ENCODE measurements at regions of chr6 and their contacts with region 1.

Region 1: DNA sequence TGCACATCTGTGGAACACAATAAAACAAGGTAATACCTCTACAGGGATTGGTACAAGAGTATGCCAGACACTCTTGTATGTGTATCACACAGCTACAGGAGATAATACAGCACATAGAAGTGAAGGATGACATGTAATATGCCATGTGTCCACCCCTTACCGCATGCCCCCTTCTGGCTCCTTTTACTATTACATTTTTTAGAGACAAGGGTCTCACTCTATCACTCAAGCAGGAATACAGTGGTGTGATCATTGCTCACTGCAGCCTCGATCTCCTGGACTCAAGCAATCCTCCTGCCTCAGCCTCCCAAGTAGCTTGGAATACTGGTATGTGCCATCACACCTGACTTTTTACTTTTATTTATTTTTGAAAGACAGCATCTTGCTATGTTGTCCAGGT is 4.2 kb upstream of the NCR3 start:
- DNase-seq: no peak
- H3K4me3 ChIP-seq: no peak overlapping the region
- H3K27ac ChIP-seq: no peak overlapping the region
- H3K4me1 ChIP-seq: no peaks in the 10 kb centered on the region
- H3K27me3 ChIP-seq: no peaks in the 10 kb centered on the region
- CTCF ChIP-seq: peak in 2 of 3 experiments; percentile 48 to 52; a peak in 2 of 4 replicates
- EP300 ChIP-seq: no peak
- POLR2A ChIP-seq: no peak
- RAD21 ChIP-seq: peak; percentile 26 to 40; a peak in 3 of 4 replicates

Region 2: GRCh38 chr6:31559958-31560696 is 36.9 kb before region 1 on chr6:
- CTCF ChIA-PET with region 1: interaction called, 613 read pairs
- POLR2A ChIA-PET with region 1: interaction called, 4 read pairs
- DNase-seq: no peak
- H3K4me3 ChIP-seq: no peak overlapping the region
- H3K27ac ChIP-seq: no peak overlapping the region
- H3K4me1 ChIP-seq: no peaks in the 10 kb centered on the region
- H3K27me3 ChIP-seq: no peaks in the 10 kb centered on the region
- CTCF ChIP-seq: no peak
- EP300 ChIP-seq: no peak
- POLR2A ChIP-seq: no peak
- RAD21 ChIP-seq: no peak

Region 3: DNA sequence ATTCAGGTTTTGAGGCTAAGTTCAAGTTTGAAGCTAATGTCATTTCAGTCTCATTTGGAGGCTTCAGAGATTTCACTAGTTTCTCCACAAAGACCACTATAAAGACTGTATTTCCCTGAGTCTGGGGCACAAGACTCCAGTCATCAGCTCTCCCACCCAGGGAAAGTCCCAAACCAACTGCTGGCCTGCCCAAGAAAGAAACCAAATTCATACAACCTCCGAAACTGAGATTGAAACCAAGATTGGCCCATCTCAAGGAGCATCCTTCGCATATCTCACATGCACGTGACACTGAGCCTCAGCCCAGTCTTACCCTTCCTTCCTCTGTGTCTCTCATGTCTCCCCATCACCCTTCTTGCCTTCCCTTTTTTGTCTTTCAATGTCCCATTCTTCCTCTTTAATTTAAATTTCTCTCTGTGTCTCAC is 28.5 kb before region 1 on chr6:
- CTCF ChIA-PET with region 1: interaction called, 640 read pairs
- POLR2A ChIA-PET with region 1: no interaction called
- DNase-seq: no peak
- H3K4me3 ChIP-seq: no peak overlapping the region
- H3K27ac ChIP-seq: no peak overlapping the region
- H3K4me1 ChIP-seq: no peaks in the 10 kb centered on the region; a peak in 2 of 7 replicates
- H3K27me3 ChIP-seq: no peaks in the 10 kb centered on the region
- CTCF ChIP-seq: no peak
- EP300 ChIP-seq: no peak
- POLR2A ChIP-seq: no peak
- RAD21 ChIP-seq: no peak

Region 4: GRCh38 chr6:31580807-31581433 is 16.1 kb before region 1 on chr6:
- CTCF ChIA-PET with region 1: interaction called, 640 read pairs
- POLR2A ChIA-PET with region 1: interaction called, 8 read pairs
- DNase-seq: peak; percentile 38 to 96
- H3K4me3 ChIP-seq: peak overlapping the region; percentile 54 to 89 (median 80)
- H3K27ac ChIP-seq: no peak overlapping the region
- H3K4me1 ChIP-seq: peaks cover 0 to 6% (median 6%) of the 10 kb centered on the region in 4 experiments; a peak in 6 of 7 replicates
- H3K27me3 ChIP-seq: peaks cover 0 to 8% (median 7%) of the 10 kb centered on the region in 4 experiments; a peak in 5 of 7 replicates
- CTCF ChIP-seq: peak in 2 of 3 experiments; percentile 89 to 93; a peak in 3 of 4 replicates
- EP300 ChIP-seq: no peak
- POLR2A ChIP-seq: 0 out of 3 replicates have a peak, but pooled peaks of 1 of the 2 experiments have one; percentile 18
- RAD21 ChIP-seq: peak; percentile 39 to 66

Region 5: GRCh38 chr6:31609519-31610406 is 12.8 kb after region 1 on chr6:
- CTCF ChIA-PET with region 1: interaction called, 63 read pairs
- POLR2A ChIA-PET with region 1: interaction called, 3 read pairs
- DNase-seq: no peak
- H3K4me3 ChIP-seq: no peak overlapping the region
- H3K27ac ChIP-seq: no peak overlapping the region
- H3K4me1 ChIP-seq: no peaks in the 10 kb centered on the region; a peak in 1 of 7 replicates
- H3K27me3 ChIP-seq: no peaks in the 10 kb centered on the region
- CTCF ChIP-seq: no peak
- EP300 ChIP-seq: no peak
- POLR2A ChIP-seq: no peak
- RAD21 ChIP-seq: no peak

Region 6: DNA sequence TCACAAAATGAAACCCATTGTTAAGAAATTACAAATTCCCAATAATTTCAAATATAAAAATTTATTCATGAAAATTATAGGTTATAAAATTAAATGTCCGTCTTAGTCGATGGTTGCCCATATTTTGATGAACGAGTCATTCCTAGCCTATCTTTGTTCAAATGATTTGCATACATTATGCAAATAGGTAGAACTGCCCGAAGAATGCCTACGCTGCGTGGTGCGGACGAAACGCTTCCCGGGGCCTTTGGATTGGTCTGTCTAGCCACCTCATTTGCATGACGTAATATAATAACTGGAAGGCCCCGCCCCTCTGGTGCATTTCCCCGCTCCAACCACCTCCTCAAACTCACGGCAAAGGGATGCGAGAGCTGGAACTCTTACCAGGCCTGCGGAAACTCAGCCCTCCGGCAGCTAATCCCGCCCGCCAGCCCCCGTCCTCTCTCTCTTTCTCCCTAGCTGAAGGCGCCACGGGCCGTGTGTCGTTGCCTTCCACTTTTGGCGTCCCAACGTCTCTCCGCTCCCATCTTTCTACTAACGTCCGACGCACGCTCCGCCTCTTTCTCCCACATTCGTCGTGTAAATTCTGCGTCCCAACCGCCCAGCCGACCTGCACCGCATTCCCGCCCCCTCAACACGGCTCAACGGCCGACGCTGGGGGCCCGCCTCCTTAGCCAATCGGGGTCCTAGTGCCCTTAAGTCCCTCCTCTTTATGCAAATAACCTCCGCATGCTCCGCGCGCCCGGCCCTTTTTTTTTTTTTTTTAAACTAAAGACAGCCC is 23.0 kb after region 1 on chr6:
- CTCF ChIA-PET with region 1: interaction called, 45 read pairs
- POLR2A ChIA-PET with region 1: interaction called, 7 read pairs
- DNase-seq: peak; percentile 94 to 97
- H3K4me3 ChIP-seq: peak overlapping the region; percentile 72 to 97 (median 82)
- H3K27ac ChIP-seq: peak overlapping the region; percentile 99
- H3K4me1 ChIP-seq: peaks cover 2 to 12% (median 7%) of the 10 kb centered on the region in 4 experiments; a peak in 6 of 7 replicates
- H3K27me3 ChIP-seq: no peaks in the 10 kb centered on the region
- CTCF ChIP-seq: no peak
- EP300 ChIP-seq: no peak
- POLR2A ChIP-seq: peak; percentile 84 to 94
- RAD21 ChIP-seq: no peak

Region 7: GRCh38 chr6:31669676-31670075 is 72.7 kb after region 1 on chr6 and contains the start of gene LY6G5B:
- CTCF ChIA-PET with region 1: no interaction called
- POLR2A ChIA-PET with region 1: no interaction called
- DNase-seq: no peak
- H3K4me3 ChIP-seq: no peak within 1 kb of the TSS
- H3K27ac ChIP-seq: no peak within 1 kb of the TSS
- H3K4me1 ChIP-seq: peaks cover 0 to 4% (median 1%) of the 10 kb centered on the region in 4 experiments; a peak in 3 of 7 replicates
- H3K27me3 ChIP-seq: no peaks in the 10 kb centered on the region
- CTCF ChIP-seq: no peak
- EP300 ChIP-seq: no peak
- POLR2A ChIP-seq: no peak
- RAD21 ChIP-seq: no peak
- total RNA-seq, gene LY6G5B: 12.1 and 12.6 TPM in 2 replicates

Region 8: GRCh38 chr6:31687321-31687720 is 90.3 kb after region 1 on chr6:
- CTCF ChIA-PET with region 1: no interaction called
- POLR2A ChIA-PET with region 1: no interaction called
- DNase-seq: no peak
- H3K4me3 ChIP-seq: no peak overlapping the region
- H3K27ac ChIP-seq: no peak overlapping the region
- H3K4me1 ChIP-seq: peaks cover 0 to 5% (median 4%) of the 10 kb centered on the region in 4 experiments; a peak in 5 of 7 replicates
- H3K27me3 ChIP-seq: peaks cover 0 to 1% (median 1%) of the 10 kb centered on the region in 4 experiments; a peak in 3 of 7 replicates
- CTCF ChIP-seq: no peak
- EP300 ChIP-seq: no peak
- POLR2A ChIP-seq: no peak
- RAD21 ChIP-seq: no peak

Measured in H1 (cell line).